OCI-LY7 (cell line): ENCODE measurements at regions of chr17 and their contacts with region 1.

Region 1: DNA sequence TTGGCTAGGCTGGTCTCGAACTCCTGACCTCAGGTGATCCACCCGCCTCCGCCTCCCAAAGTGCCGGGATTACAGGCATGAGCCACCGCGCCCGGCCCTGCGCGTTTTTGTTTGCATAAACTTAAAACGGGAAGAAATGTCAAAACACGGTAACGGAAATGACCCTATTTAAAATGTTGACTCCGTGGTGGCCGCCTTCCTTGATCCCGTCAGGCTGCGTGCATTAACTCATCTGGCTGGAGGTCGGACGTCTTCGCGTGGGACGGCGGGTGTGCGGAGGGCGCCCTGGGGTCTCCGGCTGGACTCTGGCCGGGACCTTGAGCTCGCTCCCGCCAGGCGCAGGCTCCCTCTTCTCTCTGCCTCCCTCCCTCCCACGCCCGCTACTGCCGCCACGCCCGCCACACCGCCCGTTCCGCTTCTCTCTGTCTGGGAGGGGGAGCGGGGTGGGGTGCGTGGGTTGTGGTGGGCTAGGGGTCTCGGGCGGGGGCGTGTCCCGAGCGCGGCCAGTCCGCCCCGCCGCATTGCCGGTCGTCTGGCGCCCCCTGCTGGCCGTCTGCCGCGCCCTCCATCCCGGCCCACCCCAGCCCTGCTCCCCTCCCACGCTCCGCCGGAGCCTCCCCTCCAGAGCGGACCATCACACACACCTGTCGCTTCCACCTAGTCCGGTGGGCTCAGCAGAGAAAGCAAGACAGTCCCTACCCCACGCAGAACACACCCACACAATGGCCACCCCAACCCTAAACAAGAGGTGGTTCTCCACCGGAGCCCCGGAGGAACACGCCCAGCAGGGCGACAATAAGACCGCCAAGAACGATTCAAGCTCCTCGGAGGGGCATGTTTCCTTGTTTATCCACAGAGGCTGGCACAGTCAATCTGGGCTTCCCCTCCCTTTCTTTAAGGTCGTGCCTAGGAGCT is 1.2 kb upstream of the CCDC42 start:
- DNase-seq: peak; percentile 57
- H3K4me3 ChIP-seq: peak overlapping the region; percentile 73
- H3K27ac ChIP-seq: no peak overlapping the region
- H3K4me1 ChIP-seq: no peaks in the 10 kb centered on the region
- CTCF ChIP-seq: peak; percentile 84

Region 2: DNA sequence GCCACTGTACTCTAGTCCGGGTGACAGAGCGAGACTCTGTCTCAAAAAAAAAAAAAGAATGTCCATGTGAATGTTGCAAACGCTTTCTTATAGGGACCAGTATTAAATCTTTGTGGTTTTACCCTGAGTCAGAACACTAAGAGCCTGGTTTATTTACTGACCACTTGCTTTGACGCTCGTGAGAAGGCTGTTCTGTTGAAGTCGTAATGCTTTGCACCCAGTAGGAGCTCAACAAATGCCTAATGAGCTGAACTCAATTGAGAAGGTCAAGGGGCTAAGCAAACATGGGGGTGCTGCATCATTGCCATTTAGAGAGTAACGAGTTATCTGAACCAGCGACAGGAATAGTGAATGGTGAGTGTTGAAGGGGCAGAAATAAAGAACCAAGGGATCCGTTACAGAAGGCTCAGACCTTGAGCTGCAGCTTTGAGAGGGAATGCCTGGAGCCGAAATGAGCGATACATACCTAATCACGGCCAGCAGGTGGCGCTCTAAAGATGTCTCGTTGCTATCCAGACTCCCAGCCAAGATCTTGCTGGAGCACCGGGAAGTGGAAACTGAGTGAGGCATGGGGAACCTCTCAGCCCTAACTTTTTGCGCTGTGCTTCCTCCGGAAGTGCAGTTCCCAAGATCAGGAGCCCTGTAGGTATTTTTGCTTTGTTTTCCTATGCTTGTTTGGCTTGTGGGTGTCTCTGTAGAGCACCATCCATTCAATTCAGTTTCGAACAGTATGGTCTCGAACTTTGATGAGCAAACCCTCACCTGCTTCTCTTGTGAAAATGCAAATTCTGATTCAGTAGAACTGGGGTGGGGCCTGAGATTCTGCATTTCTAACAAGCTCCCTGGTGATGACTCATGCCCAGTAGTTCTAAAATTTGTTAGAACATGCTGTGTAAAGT is 335.6 kb before region 1 on chr17:
- CTCF ChIA-PET with region 1: no interaction called
- POLR2A ChIA-PET with region 1: no interaction called
- intact Hi-C with region 1: loop called (anchors 1 kb)
- DNase-seq: peak; percentile 82
- H3K4me3 ChIP-seq: no peak overlapping the region
- H3K27ac ChIP-seq: no peak overlapping the region
- H3K4me1 ChIP-seq: no peaks in the 10 kb centered on the region
- CTCF ChIP-seq: peak; percentile 96

Region 3: DNA sequence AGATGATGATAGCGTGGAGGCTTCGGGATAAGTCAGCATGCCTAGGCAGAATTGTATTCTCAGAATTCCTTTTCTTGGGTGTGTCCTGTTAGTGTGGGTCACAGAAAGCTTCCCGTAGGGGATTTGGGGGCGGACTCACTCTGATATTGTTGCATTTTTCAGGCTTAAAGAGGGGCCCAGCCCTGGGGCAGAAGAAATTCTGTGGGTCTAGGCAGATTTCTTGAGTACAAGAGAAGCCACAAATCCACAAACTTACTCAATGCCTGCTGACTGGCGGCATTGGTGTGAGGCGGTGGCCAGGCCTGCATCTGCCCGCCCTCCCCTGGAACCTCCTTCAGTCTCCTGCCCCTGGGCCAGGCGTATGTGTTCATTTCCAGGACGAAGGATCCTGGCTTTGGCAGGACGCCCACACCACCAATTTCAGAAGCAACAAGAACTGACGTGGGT is 18.8 kb before region 1 on chr17:
- CTCF ChIA-PET with region 1: no interaction called
- POLR2A ChIA-PET with region 1: no interaction called
- intact Hi-C with region 1: no loop called
- DNase-seq: no peak
- H3K4me3 ChIP-seq: no peak overlapping the region
- H3K27ac ChIP-seq: no peak overlapping the region
- H3K4me1 ChIP-seq: no peaks in the 10 kb centered on the region
- CTCF ChIP-seq: no peak